ENCODE measurements at regions of chr14 and their contacts with region 1.

Region 1: DNA sequence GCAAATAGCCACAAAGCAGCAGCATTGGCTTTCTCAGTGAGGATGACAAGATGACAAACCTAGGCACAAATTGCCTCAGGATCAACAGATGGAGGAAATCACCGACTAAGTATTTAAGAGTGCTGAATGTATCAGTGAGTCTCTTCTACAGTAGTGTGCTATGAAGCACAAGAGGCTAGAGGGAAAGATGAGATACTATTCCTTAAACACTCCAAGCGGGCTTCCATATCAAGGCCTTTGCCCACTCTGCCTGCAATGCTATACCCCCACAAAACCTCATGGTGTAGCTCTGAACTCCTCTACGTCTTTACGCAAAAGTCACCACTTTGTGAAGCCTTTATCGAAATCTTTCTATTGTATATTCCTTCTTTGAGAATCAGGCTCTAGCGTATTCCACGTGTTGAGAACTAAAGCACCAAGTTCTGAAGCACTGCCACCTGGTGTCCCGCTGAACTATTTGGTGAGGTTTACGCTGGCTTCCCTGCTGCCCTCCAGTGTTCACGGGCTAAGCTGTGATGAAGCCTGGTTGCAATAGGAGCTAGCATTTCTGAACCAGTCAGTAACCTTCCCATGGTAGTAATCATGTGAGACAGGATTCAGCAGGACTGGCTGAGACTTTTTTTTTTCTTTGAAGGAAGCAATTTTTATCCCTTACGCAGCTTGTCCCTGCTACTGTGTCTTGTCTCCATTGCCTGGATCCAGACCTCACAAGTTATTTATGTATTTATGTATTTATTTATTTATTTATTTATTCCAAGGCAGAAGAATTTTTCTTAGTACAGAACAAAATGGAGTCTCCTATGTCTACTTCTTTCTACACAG is 426.5 kb upstream of the OR4E1 start:
- DNase-seq: peak; percentile 75
- ATAC-seq: peak; percentile 100
- H3K4me3 Mint-ChIP-seq: no peak overlapping the region
- H3K27ac Mint-ChIP-seq: no peak overlapping the region
- H3K4me1 Mint-ChIP-seq: no peaks in the 10 kb centered on the region
- H3K27me3 Mint-ChIP-seq: peaks cover 10% of the 10 kb centered on the region
- CTCF ChIP-seq: 0 out of 2 replicates have a peak, but pooled peaks have one; percentile 16

Region 2: GRCh38 chr14:21987937-21988336 is 112.2 kb before region 1 on chr14:
- CTCF ChIA-PET with region 1: interaction called, 11 read pairs
- POLR2A ChIA-PET with region 1: no interaction called
- DNase-seq: peak; percentile 27
- ATAC-seq: peak; percentile 77
- H3K4me3 Mint-ChIP-seq: no peak overlapping the region
- H3K27ac Mint-ChIP-seq: no peak overlapping the region
- H3K4me1 Mint-ChIP-seq: no peaks in the 10 kb centered on the region
- H3K27me3 Mint-ChIP-seq: peaks cover 4% of the 10 kb centered on the region; the same call in 1 of the 2 replicates
- CTCF ChIP-seq: peak; percentile 35; the same call in 1 of the 2 replicates

Region 3: DNA sequence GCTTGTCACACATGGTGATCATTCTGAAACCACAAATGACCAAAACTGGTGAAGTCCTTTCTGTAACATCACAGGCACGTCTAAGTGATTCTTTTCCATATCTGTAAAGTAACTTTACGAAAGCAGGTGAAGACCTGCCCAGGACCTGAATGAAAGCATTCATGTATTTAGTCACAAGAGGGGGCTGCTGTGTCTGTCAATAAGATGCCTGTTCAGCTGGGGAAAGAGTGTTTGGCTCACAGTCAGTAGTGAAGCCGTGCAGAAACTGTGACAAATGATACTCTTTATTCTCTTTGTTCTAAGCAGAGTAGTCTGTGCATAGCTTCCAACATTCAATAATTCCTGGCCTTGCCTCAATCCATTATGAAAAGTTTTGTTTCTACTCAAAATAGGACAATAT is 53.0 kb before region 1 on chr14:
- CTCF ChIA-PET with region 1: interaction called, 31 read pairs
- POLR2A ChIA-PET with region 1: no interaction called
- DNase-seq: no peak
- ATAC-seq: peak; percentile 86
- H3K4me3 Mint-ChIP-seq: no peak overlapping the region
- H3K27ac Mint-ChIP-seq: no peak overlapping the region
- H3K4me1 Mint-ChIP-seq: peaks cover 6% of the 10 kb centered on the region
- H3K27me3 Mint-ChIP-seq: no peaks in the 10 kb centered on the region
- CTCF ChIP-seq: no peak

Region 4: DNA sequence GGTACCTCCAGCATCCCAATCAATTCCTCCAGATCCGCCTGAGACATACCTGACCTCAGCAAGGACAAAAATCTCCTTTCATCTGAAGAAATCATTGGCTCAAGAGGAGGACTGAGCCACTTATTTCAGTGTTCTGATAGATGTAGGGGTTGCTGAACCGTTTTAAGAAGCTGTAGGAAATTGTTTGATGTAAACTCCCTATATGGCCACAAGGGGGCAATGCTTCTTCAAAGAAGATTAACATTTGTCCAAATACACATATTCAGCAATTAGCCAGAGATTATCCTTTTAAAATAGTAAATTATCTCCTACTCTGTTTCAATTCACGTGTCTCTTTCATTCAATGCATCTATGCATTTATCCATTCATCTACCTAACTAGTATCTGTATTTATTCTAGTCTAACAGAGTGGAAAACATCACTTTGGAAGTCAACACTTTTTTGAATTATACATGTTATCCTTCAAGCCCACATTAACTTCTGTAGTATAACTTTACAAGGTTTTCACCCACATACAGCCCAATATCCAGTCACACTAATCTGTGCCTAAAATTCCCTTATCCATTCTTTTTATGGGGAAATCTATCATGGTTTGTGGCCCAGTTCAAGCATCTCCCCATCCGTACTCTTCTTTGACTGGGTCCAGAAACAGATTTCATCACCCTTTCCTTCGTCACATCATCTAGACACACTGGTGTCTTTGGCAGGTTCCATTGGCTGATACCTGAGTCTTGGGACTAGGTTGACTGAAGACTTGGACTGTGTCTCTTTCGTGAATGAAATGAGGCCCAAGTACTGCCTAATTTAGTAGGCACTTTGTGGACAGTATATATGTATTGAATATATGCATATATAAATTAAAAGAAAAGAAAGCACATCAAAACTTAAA is 15.5 kb before region 1 on chr14:
- CTCF ChIA-PET with region 1: interaction called, 15 read pairs
- POLR2A ChIA-PET with region 1: no interaction called
- DNase-seq: no peak
- ATAC-seq: peak; percentile 57
- H3K4me3 Mint-ChIP-seq: no peak overlapping the region
- H3K27ac Mint-ChIP-seq: no peak overlapping the region
- H3K4me1 Mint-ChIP-seq: peaks cover 4% of the 10 kb centered on the region
- H3K27me3 Mint-ChIP-seq: 0 out of 2 replicates have a peak, but pooled peaks cover 2% of the 10 kb centered on the region
- CTCF ChIP-seq: peak; percentile 70

Region 5: GRCh38 chr14:22122227-22122818 is 22.2 kb after region 1 on chr14:
- CTCF ChIA-PET with region 1: interaction called, 13 read pairs
- POLR2A ChIA-PET with region 1: no interaction called
- DNase-seq: no peak
- ATAC-seq: peak; percentile 48; the same call in 1 of the 2 replicates
- H3K4me3 Mint-ChIP-seq: no peak overlapping the region
- H3K27ac Mint-ChIP-seq: no peak overlapping the region
- H3K4me1 Mint-ChIP-seq: no peaks in the 10 kb centered on the region
- H3K27me3 Mint-ChIP-seq: no peaks in the 10 kb centered on the region; the same call in 1 of the 2 replicates
- CTCF ChIP-seq: no peak

Region 6: GRCh38 chr14:22325676-22326400 is 225.7 kb after region 1 on chr14:
- CTCF ChIA-PET with region 1: no interaction called
- POLR2A ChIA-PET with region 1: no interaction called
- DNase-seq: no peak
- ATAC-seq: no peak
- H3K4me3 Mint-ChIP-seq: no peak overlapping the region
- H3K27ac Mint-ChIP-seq: no peak overlapping the region
- H3K4me1 Mint-ChIP-seq: no peaks in the 10 kb centered on the region
- H3K27me3 Mint-ChIP-seq: peaks cover 10% of the 10 kb centered on the region
- CTCF ChIP-seq: no peak

Region 7: GRCh38 chr14:23020143-23021128 is 920.3 kb after region 1 on chr14:
- CTCF ChIA-PET with region 1: no interaction called
- POLR2A ChIA-PET with region 1: no interaction called
- DNase-seq: no peak
- ATAC-seq: no peak
- H3K4me3 Mint-ChIP-seq: no peak overlapping the region
- H3K27ac Mint-ChIP-seq: peak overlapping the region; percentile 93
- H3K4me1 Mint-ChIP-seq: peaks cover 12% of the 10 kb centered on the region
- H3K27me3 Mint-ChIP-seq: no peaks in the 10 kb centered on the region
- CTCF ChIP-seq: no peak

Measured in WTC11 (cell line).